GM12878 (cell line): ENCODE measurements at regions of chr6 and their contacts with region 1.

Region 1: DNA sequence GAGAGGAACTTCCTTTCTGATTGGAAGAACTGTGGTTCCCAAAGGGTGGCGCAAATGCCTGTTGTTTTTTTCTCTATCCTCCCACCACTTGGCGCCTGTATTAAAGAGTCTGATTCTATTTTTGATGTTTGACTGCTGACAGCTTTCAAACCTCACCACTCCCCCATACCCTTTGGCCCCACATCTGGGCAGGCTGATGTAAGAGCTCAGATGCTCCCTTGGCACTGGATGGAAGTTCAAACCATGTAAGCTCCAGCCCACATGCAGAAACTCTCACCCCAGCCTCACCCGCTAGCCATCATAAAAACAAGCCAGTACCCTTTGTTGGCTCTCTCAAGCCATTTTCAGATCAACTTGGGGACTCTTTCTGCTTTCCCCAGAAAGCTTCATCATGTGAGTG is 20.0 kb upstream of the TMEM14A start:
- DNase-seq: no peak
- ATAC-seq: no peak
- H3K4me3 ChIP-seq: no peak overlapping the region
- H3K27ac ChIP-seq: no peak overlapping the region
- H3K4me1 ChIP-seq: no peaks in the 10 kb centered on the region
- H3K27me3 ChIP-seq: no peaks in the 10 kb centered on the region; a peak in 1 of 4 replicates
- CTCF ChIP-seq: no peak
- EP300 ChIP-seq: no peak
- POLR2A ChIP-seq: no peak
- RAD21 ChIP-seq: no peak

Region 2: DNA sequence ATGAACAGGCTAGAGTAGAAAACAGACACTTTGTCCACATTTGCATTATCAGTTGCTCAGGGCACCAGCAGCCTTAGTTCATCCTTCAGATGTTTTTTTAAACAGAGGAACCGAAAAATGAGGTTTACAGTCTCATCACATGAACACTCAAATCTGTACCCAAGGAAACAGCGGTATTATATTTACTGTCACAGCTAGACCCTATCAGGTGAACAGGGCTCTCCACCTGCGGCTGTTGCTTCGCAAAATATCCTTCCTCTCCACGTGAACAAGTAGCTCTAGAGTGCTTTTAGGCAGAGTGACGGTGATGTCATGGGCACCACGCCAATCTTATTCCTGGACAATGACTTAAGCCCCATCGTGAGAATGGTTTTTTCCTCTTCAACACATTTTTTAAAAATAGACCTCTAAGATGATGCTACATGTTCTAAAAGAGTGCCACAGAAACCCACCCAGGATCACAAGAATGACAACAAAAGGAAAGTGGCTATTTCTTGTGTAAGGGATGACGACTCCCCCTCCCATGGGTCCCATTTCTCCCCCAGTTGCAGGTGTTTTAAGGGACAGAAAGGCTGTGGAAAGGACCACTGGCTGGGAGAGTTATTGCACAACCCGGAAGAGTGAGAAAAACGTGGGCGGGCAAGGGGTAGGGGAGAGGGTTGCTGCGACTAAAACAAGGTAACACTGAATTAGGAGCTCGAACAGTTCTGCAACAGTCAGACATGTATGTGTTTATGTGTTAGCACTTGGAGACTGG is 153.1 kb before region 1 on chr6:
- CTCF ChIA-PET with region 1: interaction called, 12 read pairs
- POLR2A ChIA-PET with region 1: no interaction called
- RAD21 ChIA-PET with region 1: interaction called, 3 read pairs
- SMC1A ChIA-PET with region 1: no interaction called
- in situ Hi-C with region 1: no loop called
- intact Hi-C with region 1: no loop called
- DNase-seq: peak; percentile 95
- ATAC-seq: peak; percentile 87
- H3K4me3 ChIP-seq: peak overlapping the region; percentile 61
- H3K27ac ChIP-seq: peak overlapping the region; percentile 96
- H3K4me1 ChIP-seq: peaks cover 64% of the 10 kb centered on the region
- H3K27me3 ChIP-seq: no peaks in the 10 kb centered on the region
- CTCF ChIP-seq: no peak
- EP300 ChIP-seq: peak; percentile 94 to 95
- POLR2A ChIP-seq: no peak; the same call in 1 of the 2 replicates
- RAD21 ChIP-seq: no peak

Region 3: GRCh38 chr6:52598123-52598823 is 52.7 kb before region 1 on chr6:
- CTCF ChIA-PET with region 1: interaction called, 28 read pairs
- POLR2A ChIA-PET with region 1: no interaction called
- RAD21 ChIA-PET with region 1: interaction called, 5 read pairs
- SMC1A ChIA-PET with region 1: interaction called, 3 read pairs
- in situ Hi-C with region 1: no loop called
- intact Hi-C with region 1: no loop called
- DNase-seq: no peak
- ATAC-seq: peak; percentile 53
- H3K4me3 ChIP-seq: no peak overlapping the region
- H3K27ac ChIP-seq: no peak overlapping the region
- H3K4me1 ChIP-seq: peaks cover 30% of the 10 kb centered on the region
- H3K27me3 ChIP-seq: no peaks in the 10 kb centered on the region
- CTCF ChIP-seq: peak; percentile 41 to 60 (median 51)
- EP300 ChIP-seq: no peak
- POLR2A ChIP-seq: no peak
- RAD21 ChIP-seq: peak; percentile 56

Region 4: DNA sequence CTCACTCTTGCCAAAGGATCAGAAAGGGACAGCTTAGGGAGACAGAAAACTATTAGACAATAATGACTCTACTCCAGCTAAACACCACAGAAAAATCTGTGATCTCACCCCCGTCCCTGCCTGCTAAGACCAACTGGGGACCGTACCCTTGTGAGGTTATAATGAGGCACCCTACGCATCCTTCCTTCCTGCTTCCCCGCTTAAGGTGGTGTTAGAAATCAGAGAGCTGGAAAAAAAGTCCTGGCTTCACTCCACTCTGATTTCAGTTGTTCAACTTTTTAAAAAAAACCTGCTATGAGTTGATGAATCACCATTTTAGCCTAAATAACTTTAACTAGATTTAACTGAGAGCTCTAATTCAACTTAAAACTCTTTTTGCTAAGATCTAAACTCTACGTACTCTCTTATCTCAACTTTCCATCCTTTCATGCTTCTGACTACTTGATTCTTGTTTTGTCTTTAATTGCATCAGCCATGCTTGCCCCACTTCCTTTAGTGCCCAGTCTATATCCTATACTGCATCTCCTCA is 15.8 kb before region 1 on chr6:
- CTCF ChIA-PET with region 1: interaction called, 22 read pairs
- POLR2A ChIA-PET with region 1: interaction called, 4 read pairs
- RAD21 ChIA-PET with region 1: no interaction called
- SMC1A ChIA-PET with region 1: interaction called, 24 read pairs
- in situ Hi-C with region 1: no loop called
- intact Hi-C with region 1: no loop called
- DNase-seq: no peak
- ATAC-seq: no peak
- H3K4me3 ChIP-seq: no peak overlapping the region
- H3K27ac ChIP-seq: no peak overlapping the region
- H3K4me1 ChIP-seq: no peaks in the 10 kb centered on the region
- H3K27me3 ChIP-seq: no peaks in the 10 kb centered on the region
- CTCF ChIP-seq: no peak
- EP300 ChIP-seq: no peak
- POLR2A ChIP-seq: no peak
- RAD21 ChIP-seq: no peak

Region 5: DNA sequence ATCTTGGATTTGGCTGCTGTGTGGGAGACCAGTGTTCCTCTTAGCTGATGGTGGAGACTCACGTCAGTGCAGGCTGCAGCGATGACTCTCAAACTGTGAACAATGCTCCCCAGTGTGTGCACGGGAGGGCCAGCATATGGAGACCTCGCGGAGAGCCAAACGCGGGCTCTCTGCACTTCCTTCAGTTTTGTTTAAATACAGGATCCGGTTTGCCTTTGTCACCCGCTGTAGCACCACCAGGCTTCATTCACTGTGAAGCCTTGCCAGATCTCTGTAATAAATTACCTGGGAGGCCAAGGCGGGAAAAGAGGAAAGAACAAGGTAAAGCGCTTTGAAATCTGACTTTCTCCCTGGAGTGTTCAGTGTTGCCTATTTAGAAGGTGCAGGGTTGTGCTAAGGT is 10.8 kb before region 1 on chr6:
- CTCF ChIA-PET with region 1: interaction called, 22 read pairs
- POLR2A ChIA-PET with region 1: no interaction called
- RAD21 ChIA-PET with region 1: no interaction called
- SMC1A ChIA-PET with region 1: interaction called, 24 read pairs
- in situ Hi-C with region 1: no loop called
- intact Hi-C with region 1: no loop called
- DNase-seq: no peak
- ATAC-seq: no peak
- H3K4me3 ChIP-seq: no peak overlapping the region
- H3K27ac ChIP-seq: no peak overlapping the region
- H3K4me1 ChIP-seq: no peaks in the 10 kb centered on the region
- H3K27me3 ChIP-seq: peaks cover 0 to 7% of the 10 kb centered on the region in 2 experiments; a peak in 3 of 4 replicates
- CTCF ChIP-seq: no peak
- EP300 ChIP-seq: no peak
- POLR2A ChIP-seq: no peak
- RAD21 ChIP-seq: no peak

Region 6: DNA sequence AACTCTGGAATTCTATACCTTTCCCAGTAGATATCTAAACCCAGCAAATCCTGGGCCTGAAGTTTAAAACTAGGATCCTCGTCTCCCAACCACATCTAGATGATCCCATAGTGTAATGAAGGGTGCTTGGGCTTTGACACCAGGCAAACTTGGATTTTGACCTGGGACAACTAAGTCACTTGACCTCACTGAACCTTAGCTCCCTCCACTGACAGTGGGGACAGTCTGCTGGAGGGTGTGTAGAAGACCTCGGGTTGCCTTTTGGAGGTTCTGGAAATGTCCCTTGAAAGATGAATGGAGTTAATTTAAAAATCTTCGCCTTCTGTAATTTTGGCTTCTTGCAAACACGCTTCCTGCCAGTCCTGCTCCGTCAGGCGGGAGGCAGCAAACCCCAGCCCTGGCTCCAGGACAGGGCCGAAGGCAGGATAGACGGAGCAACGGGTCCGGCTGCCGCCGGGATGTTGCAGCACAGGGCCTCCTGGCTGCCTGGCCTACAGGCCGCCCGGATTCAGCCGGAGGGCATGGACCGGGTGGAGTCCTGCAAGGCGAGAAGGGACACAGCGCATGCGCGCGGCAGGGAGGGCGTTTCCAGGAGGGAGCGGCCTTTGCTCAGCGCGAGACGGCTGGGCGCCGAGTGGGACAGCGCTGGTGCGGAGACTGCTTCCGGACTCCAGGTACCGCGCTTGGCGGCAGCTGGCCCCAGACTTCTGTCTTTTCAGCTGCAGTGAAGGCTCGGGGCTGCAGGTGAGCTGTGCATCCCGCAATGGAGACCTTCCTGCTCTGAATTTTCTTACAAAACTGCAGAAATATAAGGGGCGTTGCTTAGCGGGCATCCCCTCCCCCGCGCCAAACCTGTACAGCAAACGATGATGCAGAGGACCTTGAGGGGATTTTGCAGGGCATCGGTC is 19.8 kb after region 1 on chr6 and contains the start of gene TMEM14A:
- CTCF ChIA-PET with region 1: interaction called, 29 read pairs
- POLR2A ChIA-PET with region 1: no interaction called
- RAD21 ChIA-PET with region 1: interaction called, 6 read pairs
- SMC1A ChIA-PET with region 1: interaction called, 7 read pairs
- in situ Hi-C with region 1: no loop called
- intact Hi-C with region 1: no loop called
- DNase-seq: peak; percentile 68
- ATAC-seq: peak; percentile 96
- H3K4me3 ChIP-seq: peak within 1 kb of the TSS; percentile 71
- H3K27ac ChIP-seq: peak within 1 kb of the TSS; percentile 45; the same call in 1 of the 2 replicates
- H3K4me1 ChIP-seq: peaks cover 20% of the 10 kb centered on the region; the same call in 1 of the 2 replicates
- H3K27me3 ChIP-seq: no peaks in the 10 kb centered on the region
- CTCF ChIP-seq: no peak
- EP300 ChIP-seq: no peak
- POLR2A ChIP-seq: peak; percentile 94
- RAD21 ChIP-seq: no peak
- polyA plus RNA-seq, gene TMEM14A: 87.2 to 143 TPM

Region 7: DNA sequence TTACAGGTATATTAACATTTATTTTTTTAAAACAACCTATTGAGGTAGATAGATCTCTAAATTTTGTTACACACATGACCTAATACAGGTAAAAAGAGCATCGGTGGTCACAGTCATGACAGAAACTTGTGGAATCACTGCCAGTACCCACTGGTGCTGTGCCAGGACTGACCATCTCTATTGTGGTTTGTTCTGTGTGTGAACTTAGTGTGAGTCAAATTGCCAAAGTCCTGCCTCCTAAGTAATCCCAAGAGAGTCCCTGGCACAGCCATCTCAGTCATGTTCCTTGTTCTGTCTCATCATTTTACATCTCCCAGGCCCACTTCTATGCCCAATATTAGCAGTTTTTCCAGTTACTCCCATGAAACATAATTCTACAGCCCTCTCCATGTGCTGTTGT is 90.9 kb after region 1 on chr6:
- CTCF ChIA-PET with region 1: no interaction called
- POLR2A ChIA-PET with region 1: no interaction called
- RAD21 ChIA-PET with region 1: no interaction called
- SMC1A ChIA-PET with region 1: no interaction called
- in situ Hi-C with region 1: no loop called
- intact Hi-C with region 1: no loop called
- DNase-seq: no peak
- ATAC-seq: no peak
- H3K4me3 ChIP-seq: no peak overlapping the region
- H3K27ac ChIP-seq: no peak overlapping the region
- H3K4me1 ChIP-seq: no peaks in the 10 kb centered on the region
- H3K27me3 ChIP-seq: no peaks in the 10 kb centered on the region; a peak in 2 of 4 replicates
- CTCF ChIP-seq: no peak
- EP300 ChIP-seq: no peak
- POLR2A ChIP-seq: no peak
- RAD21 ChIP-seq: no peak